GM13977 (cell line): ENCODE measurements at regions of chr3 and their contacts with region 1.

Region 1: DNA sequence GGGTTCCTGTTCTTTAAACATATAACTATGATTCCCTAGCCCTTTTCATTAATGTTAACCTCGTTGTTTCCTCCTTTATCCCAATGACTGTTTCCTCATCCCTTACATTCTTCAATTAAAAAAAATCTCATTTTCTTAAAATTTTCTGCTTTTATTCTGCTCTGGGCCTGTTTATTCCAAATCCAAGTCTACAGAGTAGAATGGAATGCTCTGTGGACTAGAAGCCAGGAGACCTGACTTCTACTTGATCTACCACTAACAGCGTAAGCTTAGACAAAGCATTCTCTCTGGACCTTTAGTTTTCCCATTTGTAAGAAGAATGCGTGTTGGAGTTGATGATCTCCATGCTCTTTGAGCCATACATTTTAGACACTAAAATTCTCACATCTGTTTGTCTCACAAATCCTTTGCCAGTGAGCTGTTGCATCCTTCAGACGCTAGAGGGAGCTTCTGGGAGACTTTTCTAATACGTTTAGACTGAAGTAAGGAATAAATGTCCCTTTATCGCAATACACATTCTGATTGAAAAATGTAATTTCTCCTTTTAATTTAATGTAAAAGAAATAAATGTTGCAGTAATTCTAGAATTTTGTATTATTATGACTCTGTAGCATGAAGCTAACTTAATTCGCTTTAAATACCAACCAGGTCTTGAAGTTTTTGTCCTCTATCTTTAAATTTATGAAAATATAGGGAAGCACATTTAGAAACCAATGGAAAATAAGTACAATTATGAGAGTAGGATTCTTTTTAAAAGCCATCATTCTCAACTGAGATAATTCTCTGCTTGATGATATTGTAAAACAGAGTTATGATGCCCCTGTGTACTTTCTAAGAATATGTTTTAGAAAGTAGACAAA is 21.7 kb upstream of the GMNC start:
- DNase-seq: peak; percentile 42
- CTCF ChIP-seq: peak; percentile 88

Region 2: GRCh38 chr3:191030491-191030890 is 146.3 kb after region 1 on chr3:
- in situ Hi-C with region 1: no loop called
- DNase-seq: no peak
- CTCF ChIP-seq: no peak

Region 3: GRCh38 chr3:191051037-191051436 is 166.8 kb after region 1 on chr3:
- in situ Hi-C with region 1: loop called (anchors 25 kb)
- DNase-seq: peak; percentile 19
- CTCF ChIP-seq: peak; percentile 40